MCF 10A (cell line): ENCODE measurements at regions of chr20 and their contacts with region 1.

Region 1: DNA sequence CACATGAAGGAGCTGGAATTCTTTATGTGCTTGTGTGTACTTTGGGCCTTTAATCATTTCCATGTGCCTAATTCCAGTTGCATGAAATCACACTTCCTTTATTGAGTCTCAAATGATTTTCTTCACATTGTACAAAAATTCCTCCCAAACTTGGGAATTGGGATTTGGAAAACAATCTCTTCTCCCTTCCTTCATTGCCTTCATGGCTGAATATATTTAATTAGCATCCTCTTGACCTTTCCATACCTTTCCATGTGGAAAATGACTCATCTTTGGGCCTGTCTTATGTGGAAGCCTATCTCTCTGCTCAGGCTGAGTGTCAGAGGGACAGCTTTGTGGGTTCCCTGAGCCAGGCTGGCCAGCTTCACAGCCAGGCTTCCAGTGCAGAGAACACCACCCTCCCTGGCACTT is 33.0 kb upstream of the CDH4 start:
- DNase-seq: no peak
- H3K4me3 Mint-ChIP-seq: no peak overlapping the region
- H3K27ac Mint-ChIP-seq: no peak overlapping the region
- H3K4me1 Mint-ChIP-seq: peaks cover 16% of the 10 kb centered on the region
- H3K27me3 Mint-ChIP-seq: peaks cover 53% of the 10 kb centered on the region
- CTCF ChIP-seq: no peak

Region 2: DNA sequence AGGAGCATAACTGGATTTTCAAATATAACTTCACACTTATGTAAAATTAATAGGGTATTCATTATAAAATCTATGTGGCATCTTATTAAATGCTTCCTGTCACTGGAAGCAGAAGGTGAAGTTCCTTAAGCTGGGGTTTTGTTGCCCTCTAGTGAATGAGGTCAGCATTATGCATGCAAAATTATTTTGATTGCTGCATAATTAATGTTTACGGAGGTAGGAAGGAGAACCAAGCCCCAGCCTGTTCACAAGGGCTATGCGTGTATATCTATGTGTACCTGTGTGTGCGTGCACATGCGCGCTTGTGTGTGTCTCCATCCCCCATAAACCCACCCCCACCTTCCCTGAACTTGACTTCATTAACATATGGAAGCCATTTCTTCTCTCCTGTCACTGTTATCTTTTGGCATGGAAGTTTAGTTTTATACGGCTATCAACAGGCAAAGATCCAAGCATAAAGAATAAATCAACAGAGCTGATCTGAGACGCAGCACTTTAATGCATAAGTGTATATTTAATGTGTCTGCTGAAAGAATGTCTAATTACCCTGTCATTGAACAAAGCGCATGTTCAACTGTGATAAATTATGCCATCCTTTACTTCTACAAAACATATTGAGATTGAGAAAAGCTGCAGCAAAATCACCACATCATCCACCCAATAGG is 57.2 kb before region 1 on chr20:
- CTCF ChIA-PET with region 1: no interaction called
- POLR2A ChIA-PET with region 1: no interaction called
- intact Hi-C with region 1: loop called (anchors 5 kb)
- DNase-seq: no peak
- H3K4me3 Mint-ChIP-seq: no peak overlapping the region
- H3K27ac Mint-ChIP-seq: no peak overlapping the region
- H3K4me1 Mint-ChIP-seq: no peaks in the 10 kb centered on the region
- H3K27me3 Mint-ChIP-seq: peaks cover 56% of the 10 kb centered on the region
- CTCF ChIP-seq: peak; percentile 12